MCF 10A (cell line): ENCODE measurements at regions of chr7 and their contacts with region 1.

Region 1: DNA sequence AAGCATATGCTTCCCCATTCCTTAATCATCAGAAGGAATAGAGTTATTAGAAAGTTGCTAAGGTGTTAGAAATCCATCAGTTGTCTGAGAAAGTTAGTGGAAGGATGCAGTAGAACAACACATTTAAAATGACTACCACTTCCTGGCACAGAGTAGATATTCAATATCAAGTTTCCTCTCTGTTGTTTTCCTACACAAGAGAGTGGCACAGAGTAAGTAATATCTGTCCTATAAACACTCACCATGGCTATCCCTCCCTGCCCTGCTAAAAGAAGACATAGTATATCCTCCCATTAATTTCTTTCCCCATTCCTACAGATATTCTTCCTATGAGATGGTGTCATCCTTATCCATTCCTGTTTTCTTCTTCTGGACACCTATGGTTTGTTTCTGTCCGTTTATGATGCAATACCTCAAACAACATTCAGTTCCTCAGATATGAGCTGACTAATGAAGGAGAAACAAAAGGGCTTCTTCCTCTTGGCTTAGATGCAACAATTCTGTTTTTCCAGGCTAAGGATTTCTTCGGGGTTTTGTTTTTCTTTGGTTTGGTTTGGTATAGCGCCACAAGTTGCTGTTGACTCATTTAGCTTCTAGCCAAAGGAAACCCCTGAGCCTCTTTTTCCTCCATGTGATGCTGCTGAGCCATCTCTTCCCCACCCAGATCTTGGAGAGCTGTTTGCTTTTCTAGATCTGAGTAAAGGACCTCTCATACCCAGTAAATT is 32.9 kb upstream of the BPGM start:
- DNase-seq: peak; percentile 97
- H3K4me3 Mint-ChIP-seq: no peak overlapping the region
- H3K27ac Mint-ChIP-seq: peak overlapping the region; percentile 85
- H3K4me1 Mint-ChIP-seq: peaks cover 39% of the 10 kb centered on the region
- H3K27me3 Mint-ChIP-seq: no peaks in the 10 kb centered on the region
- CTCF ChIP-seq: no peak

Region 2: GRCh38 chr7:134121632-134122139 is 492.1 kb before region 1 on chr7:
- CTCF ChIA-PET with region 1: no interaction called
- POLR2A ChIA-PET with region 1: no interaction called
- intact Hi-C with region 1: no loop called
- DNase-seq: no peak
- H3K4me3 Mint-ChIP-seq: no peak overlapping the region
- H3K27ac Mint-ChIP-seq: no peak overlapping the region
- H3K4me1 Mint-ChIP-seq: no peaks in the 10 kb centered on the region
- H3K27me3 Mint-ChIP-seq: peaks cover 38% of the 10 kb centered on the region
- CTCF ChIP-seq: no peak

Region 3: DNA sequence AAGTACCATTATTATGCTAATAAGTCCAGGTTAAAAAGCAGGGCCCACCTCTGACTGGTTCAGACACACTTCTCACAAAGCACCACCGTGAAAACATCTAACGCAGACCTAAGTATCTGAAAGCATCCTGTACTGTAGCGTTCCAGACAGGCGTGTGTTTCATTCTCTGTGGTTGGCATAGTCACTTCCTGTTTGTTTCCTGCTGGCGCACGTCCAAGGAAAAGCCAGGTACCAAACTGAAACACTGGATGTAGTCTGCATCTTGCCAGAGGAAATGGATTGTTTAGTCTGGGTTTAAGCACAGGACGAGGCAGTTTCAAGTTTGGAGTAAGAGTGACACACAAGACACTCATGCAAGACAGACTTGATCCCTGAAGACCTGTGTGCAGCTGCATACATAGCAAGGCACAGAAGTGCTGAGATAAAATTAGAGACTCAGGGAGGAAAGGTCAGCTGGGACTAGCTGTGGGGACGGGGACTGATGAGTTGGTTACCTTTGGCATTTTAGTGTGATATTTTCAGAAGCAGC is 56.1 kb after region 1 on chr7:
- CTCF ChIA-PET with region 1: no interaction called
- POLR2A ChIA-PET with region 1: no interaction called
- intact Hi-C with region 1: no loop called
- DNase-seq: peak; percentile 97
- H3K4me3 Mint-ChIP-seq: peak overlapping the region; percentile 17
- H3K27ac Mint-ChIP-seq: peak overlapping the region; percentile 44
- H3K4me1 Mint-ChIP-seq: peaks cover 11% of the 10 kb centered on the region
- H3K27me3 Mint-ChIP-seq: no peaks in the 10 kb centered on the region
- CTCF ChIP-seq: no peak

Region 4: DNA sequence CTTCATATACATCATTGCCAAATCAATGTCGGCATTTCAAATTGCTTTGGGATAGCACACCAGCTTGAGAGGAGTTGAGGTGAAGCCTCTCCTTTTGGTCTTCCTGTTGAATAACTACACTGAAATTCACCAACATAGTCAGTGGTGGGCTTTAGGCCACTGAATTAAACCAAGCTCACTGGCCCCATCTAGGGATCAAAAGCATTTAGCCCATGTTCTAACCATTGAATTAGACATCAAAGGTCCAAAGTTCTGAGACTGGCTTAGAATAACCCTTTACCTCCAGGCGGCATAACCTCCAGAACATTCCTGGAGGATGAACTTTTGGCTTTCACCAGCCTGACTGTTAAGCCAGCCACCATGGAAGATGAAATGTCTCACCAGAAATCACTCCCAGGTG is 87.5 kb after region 1 on chr7:
- CTCF ChIA-PET with region 1: no interaction called
- POLR2A ChIA-PET with region 1: no interaction called
- intact Hi-C with region 1: loop called (anchors 1 kb)
- DNase-seq: peak; percentile 49
- H3K4me3 Mint-ChIP-seq: no peak overlapping the region
- H3K27ac Mint-ChIP-seq: no peak overlapping the region
- H3K4me1 Mint-ChIP-seq: no peaks in the 10 kb centered on the region
- H3K27me3 Mint-ChIP-seq: peaks cover 10% of the 10 kb centered on the region
- CTCF ChIP-seq: peak; percentile 28

Region 5: DNA sequence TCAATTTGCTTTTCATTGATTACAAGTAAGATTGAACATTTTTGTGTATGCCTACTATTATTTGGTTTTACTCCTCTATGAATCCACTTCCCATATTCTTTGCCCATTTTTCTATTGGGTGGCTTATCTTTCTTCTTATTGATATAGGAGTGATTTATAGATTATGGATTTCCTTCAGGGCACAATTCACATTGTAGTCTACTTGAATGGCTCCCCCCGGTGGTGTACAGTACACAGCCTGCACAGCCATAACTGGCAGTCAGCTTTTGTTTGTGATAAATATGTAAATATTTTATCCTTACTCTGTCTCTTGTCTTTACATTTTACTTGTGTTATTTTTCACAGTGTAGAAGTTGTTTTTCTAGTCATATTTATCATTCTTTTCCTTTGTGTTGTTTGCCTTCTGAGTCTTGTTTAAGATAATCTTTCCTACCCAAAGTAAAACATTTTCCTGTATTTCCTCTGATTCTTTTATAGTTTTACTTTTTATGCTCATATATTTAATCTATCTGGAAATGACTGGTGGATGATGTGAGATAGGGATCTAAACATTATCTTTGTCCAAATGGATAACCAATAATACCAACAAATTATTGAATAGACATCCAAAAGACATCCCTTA is 141.7 kb after region 1 on chr7:
- CTCF ChIA-PET with region 1: interaction called, 4 read pairs
- POLR2A ChIA-PET with region 1: no interaction called
- intact Hi-C with region 1: loop called (anchors 5 kb)
- DNase-seq: peak; percentile 14
- H3K4me3 Mint-ChIP-seq: no peak overlapping the region
- H3K27ac Mint-ChIP-seq: no peak overlapping the region
- H3K4me1 Mint-ChIP-seq: peaks cover 9% of the 10 kb centered on the region
- H3K27me3 Mint-ChIP-seq: no peaks in the 10 kb centered on the region
- CTCF ChIP-seq: peak; percentile 29